ENCODE measurements at regions of chr1 and their contacts with region 1.

Region 1: GRCh38 chr1:117758444-117759316 is 152.8 kb downstream of the TENT5C start:
- DNase-seq: peak; percentile 39 to 71
- ATAC-seq: peak; percentile 88 to 96 (median 93)
- H3K4me3 ChIP-seq: peak overlapping the region in 9 of 10 donors; percentile 14 to 62 (median 53)
- H3K27ac ChIP-seq: peak overlapping the region in 1 of 10 donors; percentile 37
- H3K4me1 ChIP-seq: peaks cover 0 to 18% (median 3%) of the 10 kb centered on the region in 9 donors
- H3K27me3 ChIP-seq: no peaks in the 10 kb centered on the region
- CTCF ChIP-seq: peak; percentile 78 to 91 (median 87)

Region 2: GRCh38 chr1:117059678-117060440 is 698.8 kb before region 1 on chr1 and contains the start of gene TTF2:
- intact Hi-C with region 1: loop called in 6 of 10 experiments (anchors 5 to 10 kb)
- DNase-seq: peak; percentile 82 to 97
- ATAC-seq: peak; percentile 99 to 100 (median 99)
- H3K4me3 ChIP-seq: peak within 1 kb of the TSS; percentile 57 to 88 (median 78)
- H3K27ac ChIP-seq: peak within 1 kb of the TSS in 8 of 10 donors; percentile 7 to 82 (median 64)
- H3K4me1 ChIP-seq: peaks cover 0 to 25% (median 9%) of the 10 kb centered on the region in 9 donors
- H3K27me3 ChIP-seq: no peaks in the 10 kb centered on the region
- CTCF ChIP-seq: peak in 7 of 9 donors; percentile 15 to 57 (median 30)
- total RNA-seq, gene TTF2: 5.0 to 19.0 (median 10.4) TPM

Region 3: DNA sequence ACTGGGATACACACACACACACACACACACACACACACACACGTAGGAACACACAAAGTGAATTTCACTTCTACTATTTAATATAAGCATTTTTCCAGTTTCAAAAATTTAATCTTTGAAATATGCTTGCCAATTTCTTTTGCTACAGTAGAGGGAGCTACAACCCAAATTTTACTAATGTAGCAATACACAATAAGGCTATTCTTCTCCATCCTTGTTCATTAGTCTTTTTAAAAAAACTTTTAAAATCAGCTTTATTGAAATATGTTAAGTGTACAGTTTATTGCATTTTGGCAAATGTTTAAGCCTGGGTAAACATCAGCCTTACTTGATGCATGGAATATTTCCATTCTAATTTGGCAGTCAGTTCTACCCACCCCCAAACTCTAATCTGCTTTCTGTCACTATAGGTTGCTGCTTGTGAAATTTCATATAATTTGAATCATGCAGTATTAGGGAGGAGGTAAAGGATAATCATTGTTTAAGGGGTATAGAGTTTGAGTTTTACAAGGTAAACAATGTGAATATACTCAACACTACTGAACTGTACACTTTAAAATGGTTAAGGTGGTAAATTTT is 245.8 kb before region 1 on chr1:
- intact Hi-C with region 1: loop called in 9 of 10 experiments (anchors 2 to 5 kb)
- DNase-seq: no peak
- ATAC-seq: no peak
- H3K4me3 ChIP-seq: no peak overlapping the region
- H3K27ac ChIP-seq: no peak overlapping the region
- H3K4me1 ChIP-seq: no peaks in the 10 kb centered on the region
- H3K27me3 ChIP-seq: no peaks in the 10 kb centered on the region
- CTCF ChIP-seq: peak; percentile 13 to 65 (median 56)

Region 4: GRCh38 chr1:117605774-117606648 is 152.7 kb before region 1 on chr1 and contains the start of gene TENT5C:
- intact Hi-C with region 1: loop called in 7 of 10 experiments (anchors 5 to 10 kb)
- DNase-seq: peak; percentile 97
- ATAC-seq: peak; percentile 96 to 99 (median 97)
- H3K4me3 ChIP-seq: peak within 1 kb of the TSS; percentile 57 to 94 (median 82)
- H3K27ac ChIP-seq: peak within 1 kb of the TSS in 9 of 10 donors; percentile 70 to 90 (median 82)
- H3K4me1 ChIP-seq: peaks cover 6 to 52% (median 30%) of the 10 kb centered on the region in 9 donors
- H3K27me3 ChIP-seq: peaks cover 0 to 4% (median 0%) of the 10 kb centered on the region in 7 donors
- CTCF ChIP-seq: no peak
- total RNA-seq, gene TENT5C: 3.1 to 23.1 (median 13.0) TPM

Region 5: GRCh38 chr1:117821782-117822447 is 63.2 kb after region 1 on chr1:
- intact Hi-C with region 1: no loop called
- DNase-seq: peak in 1 of 2 donors; percentile 50
- ATAC-seq: peak in 7 of 8 donors; percentile 29 to 86 (median 77)
- H3K4me3 ChIP-seq: no peak overlapping the region
- H3K27ac ChIP-seq: peak overlapping the region in 9 of 10 donors; percentile 8 to 76 (median 62)
- H3K4me1 ChIP-seq: peaks cover 0 to 47% (median 19%) of the 10 kb centered on the region in 9 donors
- H3K27me3 ChIP-seq: no peaks in the 10 kb centered on the region
- CTCF ChIP-seq: no peak

Region 6: DNA sequence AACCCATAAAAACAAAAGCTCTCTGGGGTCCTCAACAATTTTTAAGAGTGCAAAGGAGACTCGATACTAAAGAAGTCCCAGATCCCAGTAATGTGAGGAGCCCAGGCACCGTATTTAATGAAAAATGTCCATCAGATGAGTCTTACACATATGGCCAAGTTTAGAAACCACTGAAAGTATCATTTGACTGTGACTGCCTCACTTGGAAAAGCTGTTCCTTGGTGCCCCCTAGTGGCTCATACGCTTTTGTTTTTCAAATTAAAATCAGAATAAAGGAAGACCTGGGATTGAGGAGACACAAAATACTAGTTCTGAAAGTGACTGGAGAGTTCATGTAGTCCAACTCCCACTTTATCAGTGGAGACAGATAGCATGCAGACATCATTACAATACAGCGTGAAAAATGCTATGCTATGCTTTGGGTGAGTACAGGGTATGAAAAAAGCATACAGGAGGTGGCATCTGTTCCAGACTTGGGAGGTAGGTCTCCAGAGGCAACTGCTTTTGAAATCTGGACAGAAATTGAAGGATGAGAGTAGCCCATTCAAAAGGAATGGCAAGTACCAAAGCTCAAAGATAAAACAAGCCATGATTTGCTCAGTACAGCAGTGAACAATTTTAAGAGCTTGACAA is 136.9 kb after region 1 on chr1:
- intact Hi-C with region 1: loop called in 3 of 10 experiments (anchors 5 to 10 kb)
- DNase-seq: peak in 1 of 2 donors; percentile 56
- ATAC-seq: peak in 4 of 8 donors; percentile 42 to 63 (median 48)
- H3K4me3 ChIP-seq: no peak overlapping the region
- H3K27ac ChIP-seq: no peak overlapping the region
- H3K4me1 ChIP-seq: peaks cover 0 to 7% (median 0%) of the 10 kb centered on the region in 9 donors
- H3K27me3 ChIP-seq: no peaks in the 10 kb centered on the region
- CTCF ChIP-seq: peak; percentile 51 to 84 (median 80)

Measured in heart right ventricle (tissue), 16 donors.